ENCODE measurements at regions of chr6 and their contacts with region 1.

Region 1: GRCh38 chr6:112780498-112781096 is 433.5 kb downstream of the RFPL4B start:
- DNase-seq: peak; percentile 76
- H3K4me3 Mint-ChIP-seq: no peak overlapping the region
- H3K27ac Mint-ChIP-seq: no peak overlapping the region
- H3K4me1 Mint-ChIP-seq: no peaks in the 10 kb centered on the region
- H3K27me3 Mint-ChIP-seq: no peaks in the 10 kb centered on the region
- CTCF ChIP-seq: peak; percentile 73

Region 2: DNA sequence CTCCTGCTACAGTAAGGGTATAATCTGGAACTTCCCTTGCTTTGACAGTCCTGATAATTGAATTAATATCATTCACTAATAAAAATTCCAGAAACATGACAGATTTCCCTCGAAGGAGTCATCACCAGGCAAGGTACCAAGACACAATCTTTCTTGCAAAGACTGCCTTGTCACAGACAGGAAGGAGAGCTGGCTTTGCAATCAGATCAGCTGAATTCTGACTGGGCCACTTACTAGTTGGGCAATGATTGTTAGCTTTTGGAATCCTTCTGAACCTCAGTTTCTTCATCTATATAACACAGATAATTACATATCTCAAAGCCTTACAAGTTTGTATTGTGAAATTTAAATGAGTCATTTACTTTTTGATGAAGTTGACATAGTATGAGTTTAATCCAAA is 89.3 kb before region 1 on chr6:
- CTCF ChIA-PET with region 1: no interaction called
- intact Hi-C with region 1: no loop called
- DNase-seq: peak; percentile 21
- H3K4me3 Mint-ChIP-seq: no peak overlapping the region
- H3K27ac Mint-ChIP-seq: no peak overlapping the region
- H3K4me1 Mint-ChIP-seq: peaks cover 17% of the 10 kb centered on the region
- H3K27me3 Mint-ChIP-seq: no peaks in the 10 kb centered on the region
- CTCF ChIP-seq: no peak

Region 3: DNA sequence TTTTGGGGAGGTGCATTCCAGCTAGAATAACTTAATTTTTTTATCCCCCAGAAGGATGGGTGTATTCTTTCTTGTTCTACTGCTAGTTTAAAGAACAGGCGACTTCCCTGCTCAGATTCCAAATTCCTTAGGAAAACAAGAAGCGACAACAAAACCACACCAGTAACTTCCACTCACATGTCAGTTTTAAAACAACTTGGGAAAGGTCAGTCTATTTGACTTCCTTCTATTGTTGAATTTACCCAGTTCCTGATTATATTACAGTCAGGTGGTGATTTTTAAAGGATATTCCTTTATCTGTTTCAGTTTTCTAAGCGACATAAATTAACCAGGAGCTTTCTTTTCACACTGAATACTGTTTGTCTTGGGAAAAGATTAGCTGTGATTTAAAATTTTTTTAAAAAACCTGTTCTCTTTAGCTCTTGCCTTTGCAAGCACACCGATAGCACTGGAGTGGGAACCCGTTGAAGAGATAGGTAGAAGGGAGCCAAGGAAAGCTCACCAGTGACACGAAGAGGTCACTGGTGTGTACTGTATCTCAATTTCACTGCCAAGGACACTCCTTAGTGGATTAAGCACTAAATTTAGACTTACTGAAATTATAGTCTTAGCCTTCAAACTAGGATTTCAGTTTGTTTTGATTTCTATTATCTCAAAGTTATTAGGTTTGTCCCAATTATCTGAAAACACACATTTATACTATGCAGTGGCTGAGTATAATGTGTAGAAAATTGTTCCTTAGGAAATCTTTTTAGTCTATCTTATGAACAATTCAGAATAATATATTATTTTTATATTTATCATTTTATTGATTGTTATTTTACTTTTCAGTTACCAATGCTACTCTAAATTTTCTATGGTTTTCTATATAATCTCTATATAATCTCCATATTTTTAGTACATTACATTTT is 1098.8 kb after region 1 on chr6:
- CTCF ChIA-PET with region 1: no interaction called
- intact Hi-C with region 1: loop called (anchors 1 kb)
- DNase-seq: peak; percentile 54
- H3K4me3 Mint-ChIP-seq: no peak overlapping the region
- H3K27ac Mint-ChIP-seq: no peak overlapping the region
- H3K4me1 Mint-ChIP-seq: peaks cover 16% of the 10 kb centered on the region
- H3K27me3 Mint-ChIP-seq: no peaks in the 10 kb centered on the region
- CTCF ChIP-seq: peak; percentile 55

Region 4: DNA sequence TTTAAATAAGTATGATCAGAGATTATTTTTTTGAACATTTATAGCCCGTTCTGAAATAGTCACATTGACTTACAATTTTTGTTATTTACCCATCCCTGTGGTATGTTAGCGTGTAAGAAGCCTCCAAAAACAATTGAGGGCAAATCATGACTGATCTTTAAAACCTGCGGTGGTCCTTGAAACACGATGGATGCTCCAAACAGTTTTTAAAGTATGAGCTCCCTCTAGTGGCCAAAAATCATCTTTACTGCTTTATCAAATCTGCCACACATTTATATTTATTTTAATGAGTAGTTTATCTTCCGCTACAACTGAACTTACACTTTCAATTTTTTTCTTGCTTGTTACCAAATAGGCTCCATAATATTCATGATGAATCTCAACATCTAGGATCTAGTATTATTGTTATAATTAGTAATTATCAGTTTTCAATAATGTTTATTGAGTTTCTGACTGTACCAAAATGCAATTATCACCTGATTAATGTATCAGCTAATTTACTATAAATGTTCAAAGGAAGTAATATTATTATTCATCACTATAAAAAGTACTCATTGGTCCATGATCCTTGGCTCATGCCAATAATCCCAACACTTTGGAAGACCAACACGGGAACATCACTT is 1128.7 kb after region 1 on chr6:
- CTCF ChIA-PET with region 1: no interaction called
- intact Hi-C with region 1: loop called (anchors 1 kb)
- DNase-seq: peak; percentile 32
- H3K4me3 Mint-ChIP-seq: no peak overlapping the region
- H3K27ac Mint-ChIP-seq: no peak overlapping the region
- H3K4me1 Mint-ChIP-seq: no peaks in the 10 kb centered on the region
- H3K27me3 Mint-ChIP-seq: no peaks in the 10 kb centered on the region
- CTCF ChIP-seq: peak; percentile 33

Measured in Calu3 (cell line).